ENCODE measurements at regions of chr5 and their contacts with region 1.

Region 1: GRCh38 chr5:138542956-138543729 is at the start of gene ETF1:
- DNase-seq: peak; percentile 98 to 100 (median 99)
- ATAC-seq: peak; percentile 88
- H3K4me3 ChIP-seq: peak within 1 kb of the TSS; percentile 97
- H3K27ac ChIP-seq: peak within 1 kb of the TSS; percentile 97
- H3K4me1 ChIP-seq: peaks cover 7 to 36% of the 10 kb centered on the region in 2 experiments
- H3K27me3 ChIP-seq: no peaks in the 10 kb centered on the region
- CTCF ChIP-seq: 0 out of 6 replicates have a peak, but pooled peaks of 1 of the 3 experiments have one; percentile 8
- EP300 ChIP-seq: 0 out of 2 replicates have a peak, but pooled peaks have one; percentile 13
- POLR2A ChIP-seq: peak; percentile 94
- RAD21 ChIP-seq: no peak
- polyA plus RNA-seq, gene ETF1: 53.7 to 57.3 TPM

Region 2: DNA sequence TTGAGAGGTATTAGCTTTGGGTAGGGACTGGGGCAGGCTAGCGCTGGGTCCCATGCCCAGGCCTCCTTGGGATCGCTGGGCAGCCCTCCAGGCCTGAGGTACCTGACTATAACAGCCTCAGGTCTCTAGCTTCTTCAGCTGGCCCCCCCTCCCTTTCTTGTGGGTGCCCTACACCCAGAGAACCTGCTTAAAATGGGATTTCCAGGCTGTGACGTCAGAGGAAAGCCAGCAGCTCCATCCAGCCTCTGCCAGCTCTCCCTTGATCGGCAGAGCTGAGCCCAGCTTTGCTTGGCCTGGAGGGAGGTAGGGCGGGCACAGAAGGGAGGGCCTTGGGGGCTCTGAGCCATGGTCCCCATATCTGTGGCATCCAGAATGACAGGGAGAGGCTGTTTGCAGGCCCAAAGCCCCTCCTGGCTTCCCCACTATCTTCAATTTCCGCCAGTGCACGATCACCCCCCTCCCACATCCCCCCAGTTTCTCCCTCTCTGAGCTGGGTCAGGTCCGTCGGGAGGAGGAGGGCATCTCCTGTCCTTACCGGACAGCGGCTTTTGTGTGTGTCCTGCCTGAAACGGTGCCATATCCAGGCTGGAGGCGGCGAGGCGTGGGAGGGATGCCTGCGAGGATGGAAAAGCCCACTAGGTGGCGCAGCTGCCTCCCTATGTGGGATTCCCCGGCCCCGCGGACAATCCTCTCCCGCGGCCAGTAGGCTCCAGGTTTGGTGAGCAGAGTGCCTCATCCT is 93.5 kb before region 1 on chr5:
- CTCF ChIA-PET with region 1: interaction called, 4 read pairs
- POLR2A ChIA-PET with region 1: interaction called, 7 read pairs
- in situ Hi-C with region 1: no loop called
- intact Hi-C with region 1: loop called (anchors 1 kb)
- DNase-seq: peak; percentile 90 to 93 (median 92)
- ATAC-seq: peak; percentile 95
- H3K4me3 ChIP-seq: no peak overlapping the region
- H3K27ac ChIP-seq: no peak overlapping the region
- H3K4me1 ChIP-seq: peaks cover 9 to 47% of the 10 kb centered on the region in 2 experiments; a peak in 4 of 5 replicates
- H3K27me3 ChIP-seq: no peaks in the 10 kb centered on the region
- CTCF ChIP-seq: peak; percentile 96 to 98 (median 97)
- EP300 ChIP-seq: no peak
- POLR2A ChIP-seq: no peak
- RAD21 ChIP-seq: peak; percentile 91 to 96

Region 3: DNA sequence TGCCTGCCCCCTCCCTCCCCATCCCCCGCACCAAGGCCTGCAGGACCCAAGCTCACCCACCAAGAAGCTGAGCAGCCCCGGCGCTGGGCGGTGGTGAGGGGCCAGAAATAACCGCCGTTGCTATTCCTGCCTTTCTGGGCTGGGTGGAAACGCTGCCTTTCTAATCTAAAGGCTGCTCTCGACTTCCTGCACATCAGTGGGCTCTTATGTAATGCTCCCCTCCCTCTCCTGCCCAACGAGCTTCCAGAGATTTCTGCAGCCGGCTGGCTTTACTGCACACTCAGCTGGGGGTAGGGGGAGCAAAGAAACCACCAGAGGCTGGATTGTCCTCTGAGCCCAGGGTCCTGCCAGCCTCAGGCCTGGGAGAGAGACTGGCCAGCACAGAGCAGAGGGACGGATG is 84.8 kb before region 1 on chr5:
- CTCF ChIA-PET with region 1: interaction called, 4 read pairs
- POLR2A ChIA-PET with region 1: interaction called, 26 read pairs
- in situ Hi-C with region 1: no loop called
- intact Hi-C with region 1: no loop called
- DNase-seq: no peak
- ATAC-seq: no peak
- H3K4me3 ChIP-seq: no peak overlapping the region
- H3K27ac ChIP-seq: no peak overlapping the region
- H3K4me1 ChIP-seq: peaks cover 20 to 38% of the 10 kb centered on the region in 2 experiments
- H3K27me3 ChIP-seq: no peaks in the 10 kb centered on the region
- CTCF ChIP-seq: no peak
- EP300 ChIP-seq: no peak
- POLR2A ChIP-seq: no peak
- RAD21 ChIP-seq: no peak

Region 4: GRCh38 chr5:138528208-138528607 is 14.9 kb before region 1 on chr5:
- CTCF ChIA-PET with region 1: no interaction called
- POLR2A ChIA-PET with region 1: interaction called, 13 read pairs
- in situ Hi-C with region 1: no loop called
- intact Hi-C with region 1: no loop called
- DNase-seq: no peak
- ATAC-seq: no peak
- H3K4me3 ChIP-seq: no peak overlapping the region
- H3K27ac ChIP-seq: no peak overlapping the region
- H3K4me1 ChIP-seq: peaks cover 4 to 11% of the 10 kb centered on the region in 2 experiments; a peak in 3 of 5 replicates
- H3K27me3 ChIP-seq: no peaks in the 10 kb centered on the region
- CTCF ChIP-seq: no peak
- EP300 ChIP-seq: no peak
- POLR2A ChIP-seq: no peak
- RAD21 ChIP-seq: no peak

Region 5: GRCh38 chr5:138559937-138560336 is 16.8 kb after region 1 on chr5:
- CTCF ChIA-PET with region 1: no interaction called
- POLR2A ChIA-PET with region 1: interaction called, 32 read pairs
- in situ Hi-C with region 1: no loop called
- intact Hi-C with region 1: no loop called
- DNase-seq: no peak
- ATAC-seq: peak; percentile 4
- H3K4me3 ChIP-seq: no peak overlapping the region
- H3K27ac ChIP-seq: no peak overlapping the region
- H3K4me1 ChIP-seq: no peaks in the 10 kb centered on the region
- H3K27me3 ChIP-seq: no peaks in the 10 kb centered on the region
- CTCF ChIP-seq: no peak
- EP300 ChIP-seq: no peak
- POLR2A ChIP-seq: peak; percentile 55; the same call in 1 of the 2 replicates
- RAD21 ChIP-seq: no peak

Region 6: DNA sequence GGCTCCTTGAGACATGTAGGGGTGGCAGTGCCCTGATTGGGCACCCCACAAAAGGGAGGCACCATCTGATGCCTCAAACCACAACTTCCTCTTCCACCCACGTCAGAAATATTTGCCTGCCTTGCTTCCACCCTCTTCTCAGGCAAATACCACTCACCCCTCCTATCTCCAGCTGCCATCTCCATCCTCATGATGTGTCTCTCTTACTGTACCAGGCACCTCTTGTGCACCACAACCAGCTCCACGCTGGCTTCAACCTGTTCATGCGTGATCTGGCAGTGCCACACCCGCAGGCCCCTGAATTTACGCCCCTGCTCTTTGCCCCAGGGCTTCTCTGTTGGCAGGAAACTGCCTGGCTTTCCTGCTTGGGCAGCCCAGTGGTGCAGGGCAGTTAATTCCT is 119.9 kb after region 1 on chr5:
- CTCF ChIA-PET with region 1: no interaction called
- POLR2A ChIA-PET with region 1: no interaction called
- in situ Hi-C with region 1: no loop called
- intact Hi-C with region 1: no loop called
- DNase-seq: no peak
- ATAC-seq: no peak
- H3K4me3 ChIP-seq: no peak overlapping the region
- H3K27ac ChIP-seq: no peak overlapping the region
- H3K4me1 ChIP-seq: peaks cover 0 to 4% of the 10 kb centered on the region in 2 experiments; a peak in 2 of 5 replicates
- H3K27me3 ChIP-seq: peaks cover 8 to 66% of the 10 kb centered on the region in 2 experiments; a peak in 4 of 5 replicates
- CTCF ChIP-seq: no peak
- EP300 ChIP-seq: no peak
- POLR2A ChIP-seq: no peak
- RAD21 ChIP-seq: no peak